Adrenal gland (tissue), 19 donors: ENCODE measurements at regions of chr2 and their contacts with region 1.

Region 1: GRCh38 chr2:109486711-109487535 is 126.8 kb downstream of the SEPTIN10 start:
- DNase-seq: no peak
- H3K4me3 ChIP-seq: no peak overlapping the region
- H3K27ac ChIP-seq: no peak overlapping the region
- H3K4me1 ChIP-seq: peaks cover 0 to 18% of the 10 kb centered on the region in 2 donors
- H3K27me3 ChIP-seq: no peaks in the 10 kb centered on the region
- CTCF ChIP-seq: no peak
- POLR2A ChIP-seq: no peak

Region 2: DNA sequence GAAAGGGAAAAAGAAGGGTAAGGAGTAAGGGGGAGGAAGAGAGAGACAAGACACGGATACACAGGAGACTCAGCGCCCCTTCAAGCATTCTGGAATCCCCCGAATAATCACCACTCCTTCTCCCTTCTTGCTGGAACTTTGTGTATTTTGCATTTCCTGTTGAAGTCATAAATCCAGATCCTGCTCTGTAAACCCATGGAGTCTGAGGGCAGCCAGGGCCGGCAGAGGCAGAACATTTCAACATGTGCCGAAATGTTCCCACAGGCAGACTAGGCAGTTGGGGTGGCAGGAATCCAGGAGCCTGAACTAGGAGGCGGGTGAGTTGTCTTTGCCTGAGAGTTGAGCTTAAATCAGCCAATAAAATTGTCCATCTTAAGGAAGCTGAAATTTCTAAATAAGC is 164.8 kb before region 1 on chr2:
- intact Hi-C with region 1: loop called in 1 of 2 experiments (anchors 10 kb)
- DNase-seq: peak; percentile 59 to 95 (median 90)
- H3K4me3 ChIP-seq: peak overlapping the region in 1 of 4 donors; percentile 19
- H3K27ac ChIP-seq: peak overlapping the region; percentile 24 to 81 (median 70)
- H3K4me1 ChIP-seq: peaks cover 18 to 54% of the 10 kb centered on the region in 2 donors
- H3K27me3 ChIP-seq: no peaks in the 10 kb centered on the region
- CTCF ChIP-seq: no peak
- POLR2A ChIP-seq: peak in 1 of 2 donors; percentile 27